ENCODE measurements at regions of chr12 and their contacts with region 1.

Region 1: DNA sequence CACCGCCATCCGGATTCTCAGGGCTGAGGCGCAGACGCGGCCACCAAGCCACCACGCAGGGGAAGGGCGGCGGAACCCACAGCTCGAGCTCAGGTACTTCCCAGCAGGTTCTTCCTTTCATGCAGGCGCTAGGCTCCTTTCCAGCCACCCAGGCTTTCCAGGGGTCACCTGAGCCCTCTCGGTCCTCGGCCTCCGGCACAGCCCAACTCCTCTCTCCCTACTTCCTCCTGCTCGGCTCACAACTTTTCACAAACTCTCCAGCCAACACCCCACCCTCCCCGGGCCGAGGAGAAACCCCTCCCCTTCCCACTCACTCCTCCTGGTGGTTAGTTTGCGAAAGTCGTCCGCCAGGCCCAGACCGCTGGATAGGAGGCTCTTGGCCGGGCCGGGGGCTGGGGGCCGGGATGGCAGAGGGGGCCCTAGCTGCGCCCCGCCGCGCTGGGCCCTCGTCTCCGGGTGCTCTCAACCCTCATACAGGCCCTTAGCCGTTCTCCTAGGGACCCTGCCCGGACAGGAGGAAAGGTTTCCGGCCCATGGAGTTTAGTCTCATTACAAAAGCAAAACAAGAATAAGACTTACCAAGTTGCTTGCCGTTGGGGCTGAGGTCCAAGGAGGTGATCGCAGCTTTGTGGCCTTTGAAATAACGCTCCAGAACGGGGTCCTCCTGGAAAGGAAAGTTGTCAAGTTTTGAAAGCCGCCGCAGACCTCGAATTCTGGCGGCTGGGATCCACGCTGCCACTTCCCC is at the start of gene GALNT4:
- DNase-seq: peak; percentile 78 to 86 (median 80)
- H3K4me3 ChIP-seq: peak within 1 kb of the TSS; percentile 72 to 93
- H3K4me3 Mint-ChIP-seq: peak within 1 kb of the TSS; percentile 95 to 98 (median 98)
- H3K27ac ChIP-seq: peak within 1 kb of the TSS; percentile 87
- H3K27ac Mint-ChIP-seq: peak within 1 kb of the TSS; percentile 83 to 96 (median 95)
- H3K4me1 ChIP-seq: peaks cover 49% of the 10 kb centered on the region
- H3K4me1 Mint-ChIP-seq: peaks cover 34 to 57% (median 44%) of the 10 kb centered on the region in 4 donors
- H3K27me3 ChIP-seq: no peaks in the 10 kb centered on the region
- H3K27me3 Mint-ChIP-seq: no peaks in the 10 kb centered on the region
- total RNA-seq, gene GALNT4: 7.2 to 7.6 TPM

Region 2: GRCh38 chr12:88035271-88035906 is 1489.3 kb before region 1 on chr12:
- CTCF ChIA-PET with region 1: no interaction called
- POLR2A ChIA-PET with region 1: no interaction called
- intact Hi-C with region 1: loop called (anchors 5 kb)
- DNase-seq: peak; percentile 84 to 89 (median 86)
- H3K4me3 ChIP-seq: peak overlapping the region; percentile 42 to 82
- H3K4me3 Mint-ChIP-seq: peak overlapping the region; percentile 92 to 99 (median 96)
- H3K27ac ChIP-seq: peak overlapping the region; percentile 56
- H3K27ac Mint-ChIP-seq: peak overlapping the region; percentile 85 to 98 (median 95)
- H3K4me1 ChIP-seq: peaks cover 41% of the 10 kb centered on the region
- H3K4me1 Mint-ChIP-seq: peaks cover 33 to 53% (median 45%) of the 10 kb centered on the region in 4 donors
- H3K27me3 ChIP-seq: no peaks in the 10 kb centered on the region
- H3K27me3 Mint-ChIP-seq: no peaks in the 10 kb centered on the region

Region 3: DNA sequence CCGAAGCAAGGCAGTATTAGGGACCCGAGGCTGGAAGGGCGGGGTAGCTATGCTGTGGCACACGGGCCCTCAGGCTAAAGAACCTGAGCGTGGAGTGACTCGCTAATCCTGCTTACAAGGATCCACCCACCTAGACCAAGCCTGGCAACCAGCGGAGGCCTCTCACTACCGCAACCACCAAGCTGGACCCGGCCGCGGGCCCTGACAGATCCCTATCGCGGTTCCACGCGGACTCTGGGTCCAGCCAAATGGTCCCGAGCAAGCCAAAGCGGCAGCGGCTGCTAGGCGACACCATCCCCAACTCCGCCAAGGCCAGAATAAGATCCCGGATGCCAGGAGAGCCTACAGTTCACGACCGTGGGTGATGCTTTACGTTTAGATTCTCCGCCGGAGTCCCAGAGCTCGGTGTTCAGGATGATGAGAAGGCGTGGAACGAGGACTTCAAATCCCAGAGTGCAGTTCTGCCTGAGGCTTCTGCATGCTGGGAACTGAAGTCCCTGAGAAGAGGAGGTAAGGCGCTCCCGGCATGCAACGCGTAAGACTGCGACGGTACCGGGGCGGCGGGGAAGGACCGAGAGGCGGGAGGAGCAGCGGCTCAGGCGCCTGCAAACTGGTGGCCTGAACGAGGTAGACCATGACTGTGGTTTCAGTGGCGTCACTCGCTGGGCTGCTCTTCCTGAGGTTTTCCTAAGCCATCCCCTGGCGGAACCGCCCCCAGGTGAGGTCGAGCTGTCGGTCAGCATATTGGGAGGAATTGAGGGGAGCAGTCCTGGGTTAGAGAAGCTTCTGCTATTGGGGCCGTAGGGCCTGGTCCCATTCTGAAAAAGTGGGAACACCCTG is 1382.7 kb before region 1 on chr12 and contains the starts of genes CEP290 and TMTC3:
- CTCF ChIA-PET with region 1: interaction called, 4 read pairs
- POLR2A ChIA-PET with region 1: interaction called, 3 read pairs
- intact Hi-C with region 1: loop called (anchors 1 kb)
- DNase-seq: peak; percentile 94 to 99 (median 95)
- H3K4me3 ChIP-seq: peak within 1 kb of the TSS; percentile 87 to 88
- H3K4me3 Mint-ChIP-seq: peak within 1 kb of the TSS; percentile 94 to 98 (median 96)
- H3K27ac ChIP-seq: peak within 1 kb of the TSS; percentile 76
- H3K27ac Mint-ChIP-seq: peak within 1 kb of the TSS; percentile 90 to 99 (median 98)
- H3K4me1 ChIP-seq: peaks cover 29% of the 10 kb centered on the region
- H3K4me1 Mint-ChIP-seq: peaks cover 27 to 52% (median 41%) of the 10 kb centered on the region in 4 donors
- H3K27me3 ChIP-seq: no peaks in the 10 kb centered on the region
- H3K27me3 Mint-ChIP-seq: no peaks in the 10 kb centered on the region
- total RNA-seq, gene CEP290: 22.4 to 23.0 TPM
- total RNA-seq, gene TMTC3: 11.5 to 15.2 TPM

Region 4: DNA sequence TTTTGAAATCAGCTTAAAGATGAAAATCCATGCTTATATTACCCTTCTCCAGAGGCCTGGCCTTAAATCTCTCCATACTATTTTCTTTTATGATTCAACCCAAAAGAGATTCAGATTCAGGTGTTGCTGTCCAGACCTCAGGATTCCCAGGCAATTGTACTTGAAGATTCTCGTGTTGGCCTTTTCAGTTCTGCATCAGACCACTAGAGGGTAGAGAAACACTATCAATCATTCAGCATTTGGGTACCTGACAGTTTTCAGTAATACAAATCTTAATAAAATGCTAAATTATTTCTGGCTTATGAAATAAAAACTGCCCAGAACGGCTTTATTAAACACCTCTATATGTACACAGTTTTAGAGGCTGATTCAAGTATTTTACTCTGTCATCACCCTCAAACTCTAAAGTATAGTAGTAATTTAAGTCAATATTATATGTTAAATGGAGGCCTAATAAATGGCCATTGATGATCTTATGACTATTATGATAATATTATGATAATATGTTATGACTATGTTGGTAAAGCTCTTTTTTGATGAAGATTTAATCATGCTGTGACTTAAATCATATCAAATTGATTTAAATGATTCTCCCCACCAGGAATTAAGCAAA is 473.5 kb before region 1 on chr12:
- CTCF ChIA-PET with region 1: interaction called, 6 read pairs
- POLR2A ChIA-PET with region 1: no interaction called
- intact Hi-C with region 1: loop called (anchors 1 kb)
- DNase-seq: peak; percentile 35 to 60 (median 51)
- H3K4me3 ChIP-seq: no peak overlapping the region
- H3K4me3 Mint-ChIP-seq: no peak overlapping the region
- H3K27ac ChIP-seq: no peak overlapping the region
- H3K27ac Mint-ChIP-seq: no peak overlapping the region
- H3K4me1 ChIP-seq: no peaks in the 10 kb centered on the region
- H3K4me1 Mint-ChIP-seq: peaks cover 0 to 3% (median 1%) of the 10 kb centered on the region in 4 donors
- H3K27me3 ChIP-seq: no peaks in the 10 kb centered on the region
- H3K27me3 Mint-ChIP-seq: peaks cover 0 to 1% of the 10 kb centered on the region in 2 donors

Region 5: DNA sequence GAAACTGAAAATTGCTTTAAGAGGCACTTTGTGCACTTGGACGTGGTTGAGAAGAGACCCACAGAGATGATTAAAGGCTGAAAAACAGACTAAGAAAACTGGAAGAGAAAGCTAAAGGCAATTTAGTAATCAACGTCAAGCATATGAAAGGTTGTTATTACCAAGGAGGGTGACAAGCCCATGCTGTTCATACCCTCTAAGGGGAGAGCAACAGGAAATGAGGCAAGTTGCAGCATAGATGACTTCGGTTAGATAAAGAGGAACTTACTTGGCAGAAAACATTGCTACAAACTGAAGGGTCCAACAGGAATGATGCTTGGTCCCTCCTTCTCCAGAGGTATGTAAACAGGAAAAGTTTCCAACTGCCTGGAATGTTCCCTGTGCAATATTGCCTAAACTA is 280.2 kb before region 1 on chr12:
- CTCF ChIA-PET with region 1: interaction called, 4 read pairs
- POLR2A ChIA-PET with region 1: no interaction called
- intact Hi-C with region 1: loop called (anchors 10 kb)
- DNase-seq: peak; percentile 28 to 59 (median 49)
- H3K4me3 ChIP-seq: peak overlapping the region in 1 of 2 donors; percentile 21
- H3K4me3 Mint-ChIP-seq: peak overlapping the region; percentile 6 to 70 (median 50)
- H3K27ac ChIP-seq: no peak overlapping the region
- H3K27ac Mint-ChIP-seq: peak overlapping the region; percentile 13 to 73 (median 57)
- H3K4me1 ChIP-seq: peaks cover 30% of the 10 kb centered on the region
- H3K4me1 Mint-ChIP-seq: peaks cover 31 to 34% (median 33%) of the 10 kb centered on the region in 4 donors
- H3K27me3 ChIP-seq: no peaks in the 10 kb centered on the region
- H3K27me3 Mint-ChIP-seq: no peaks in the 10 kb centered on the region

Region 6: DNA sequence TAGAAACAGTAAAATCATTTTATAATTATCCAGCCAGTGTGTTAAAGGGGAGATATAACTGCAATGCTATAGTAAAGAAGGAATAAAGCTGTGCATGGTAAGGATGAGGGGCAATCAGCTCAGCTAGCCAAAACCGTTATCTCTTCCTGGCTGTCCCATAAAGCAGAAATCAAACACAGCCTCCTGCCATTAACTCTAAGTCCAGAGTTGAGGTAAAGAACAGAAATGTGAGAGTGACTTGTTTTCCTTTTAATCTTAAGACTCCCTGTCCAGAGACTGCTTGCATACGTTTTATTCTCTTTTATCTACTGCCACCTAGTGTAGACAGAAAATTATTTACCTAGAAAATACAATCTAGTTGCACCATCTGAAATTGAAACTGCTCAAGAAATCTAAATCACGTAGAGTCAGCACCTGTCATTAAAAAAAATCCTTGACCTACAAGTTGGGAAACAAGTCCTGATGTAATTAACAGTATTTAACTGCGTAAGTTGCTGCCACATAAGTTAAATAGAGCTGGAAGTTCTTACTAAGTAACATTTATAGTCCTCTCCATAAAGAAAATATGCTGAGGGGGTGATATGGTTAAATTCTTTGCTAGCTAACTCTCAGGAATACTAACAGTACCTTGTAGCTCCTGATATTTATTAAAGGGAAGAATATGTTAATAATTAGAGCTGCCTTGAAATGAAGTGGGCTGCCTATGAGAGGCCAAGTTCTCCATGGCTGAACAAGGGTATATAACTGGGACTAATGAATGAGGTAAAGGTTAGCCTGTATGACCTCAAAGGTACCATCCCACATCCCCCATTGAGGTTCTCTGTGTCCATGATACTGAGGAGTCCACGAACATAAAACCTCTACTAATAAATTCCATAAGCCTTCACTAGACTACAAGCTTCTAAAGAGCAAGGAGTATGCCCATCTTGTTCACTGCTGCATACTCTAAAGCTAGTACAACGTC is 62.8 kb before region 1 on chr12:
- CTCF ChIA-PET with region 1: interaction called, 185 read pairs
- POLR2A ChIA-PET with region 1: interaction called, 23 read pairs
- intact Hi-C with region 1: loop called (anchors 2 kb)
- DNase-seq: peak in 4 of 5 donors; percentile 57 to 62 (median 58)
- H3K4me3 ChIP-seq: no peak overlapping the region
- H3K4me3 Mint-ChIP-seq: peak overlapping the region in 4 of 8 donors; percentile 40 to 72 (median 58)
- H3K27ac ChIP-seq: no peak overlapping the region
- H3K27ac Mint-ChIP-seq: peak overlapping the region in 5 of 7 donors; percentile 49 to 78 (median 61)
- H3K4me1 ChIP-seq: peaks cover 12% of the 10 kb centered on the region
- H3K4me1 Mint-ChIP-seq: peaks cover 15 to 18% (median 17%) of the 10 kb centered on the region in 4 donors
- H3K27me3 ChIP-seq: no peaks in the 10 kb centered on the region
- H3K27me3 Mint-ChIP-seq: no peaks in the 10 kb centered on the region

Region 7: DNA sequence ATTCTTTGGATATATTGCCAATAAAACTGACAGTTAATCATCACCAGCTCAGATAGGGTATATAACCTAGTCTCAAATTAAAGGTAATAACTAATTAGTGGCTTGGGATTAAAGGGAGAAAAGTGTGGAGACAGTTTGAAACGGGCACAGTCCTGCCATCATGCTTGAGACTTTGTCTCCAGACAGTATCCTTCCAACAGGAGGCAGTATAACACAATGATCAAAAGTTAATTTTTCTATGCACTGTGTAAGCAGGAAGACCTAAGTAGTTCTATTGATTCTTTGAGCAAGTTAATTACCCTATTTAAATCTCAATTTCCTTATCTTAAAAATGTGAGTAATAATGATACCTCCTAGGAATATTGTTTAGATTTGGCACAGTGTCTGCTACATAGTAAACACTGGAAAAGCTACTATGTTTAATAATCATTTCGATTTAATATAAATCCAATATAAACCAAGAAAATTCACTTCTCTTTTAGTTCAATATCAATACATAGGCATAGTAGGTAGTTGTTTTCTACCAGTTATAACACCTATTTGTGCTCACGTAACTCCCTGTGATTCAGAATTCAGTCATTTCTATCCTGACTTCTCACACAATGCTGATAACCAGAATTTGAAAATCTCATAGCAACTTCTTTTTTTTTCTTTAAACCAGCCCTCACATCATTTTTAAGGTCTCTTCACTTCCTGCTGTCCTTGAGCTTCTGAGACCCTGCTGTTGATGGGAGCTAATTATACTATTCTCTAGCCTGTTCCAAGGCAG is 53.8 kb before region 1 on chr12:
- CTCF ChIA-PET with region 1: interaction called, 185 read pairs
- POLR2A ChIA-PET with region 1: interaction called, 23 read pairs
- intact Hi-C with region 1: loop called (anchors 1 kb)
- DNase-seq: peak in 4 of 5 donors; percentile 47 to 55 (median 53)
- H3K4me3 ChIP-seq: no peak overlapping the region
- H3K4me3 Mint-ChIP-seq: peak overlapping the region in 2 of 8 donors; percentile 41 to 55
- H3K27ac ChIP-seq: no peak overlapping the region
- H3K27ac Mint-ChIP-seq: peak overlapping the region in 4 of 7 donors; percentile 28 to 84 (median 76)
- H3K4me1 ChIP-seq: peaks cover 52% of the 10 kb centered on the region
- H3K4me1 Mint-ChIP-seq: peaks cover 34 to 60% (median 46%) of the 10 kb centered on the region in 4 donors
- H3K27me3 ChIP-seq: no peaks in the 10 kb centered on the region
- H3K27me3 Mint-ChIP-seq: no peaks in the 10 kb centered on the region